ENCODE measurements at regions of chr2 and their contacts with region 1.

Region 1: DNA sequence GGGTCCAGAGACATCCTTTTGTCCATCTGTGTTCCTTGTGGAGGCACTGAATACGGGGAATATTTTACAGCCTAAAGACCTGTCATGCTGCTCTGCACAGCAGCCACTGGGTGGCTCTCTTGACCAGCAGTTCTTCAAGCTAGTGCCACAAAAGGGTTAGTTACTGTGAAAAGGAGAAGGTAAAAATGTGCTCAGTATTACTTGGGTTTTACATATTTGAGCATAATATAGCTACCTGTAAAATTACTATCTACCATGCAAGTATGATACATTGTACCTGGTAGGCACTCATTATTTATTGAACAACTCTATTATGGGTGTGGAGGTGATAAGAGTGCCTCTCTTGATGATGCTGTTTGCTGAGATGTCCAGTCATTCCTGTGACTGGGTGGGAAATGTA is 23.6 kb downstream of the FZD5 start:
- DNase-seq: no peak
- H3K4me3 ChIP-seq: no peak overlapping the region
- H3K27ac ChIP-seq: no peak overlapping the region
- H3K4me1 ChIP-seq: peaks cover 0 to 5% (median 0%) of the 10 kb centered on the region in 4 experiments; a peak in 1 of 7 replicates
- H3K27me3 ChIP-seq: no peaks in the 10 kb centered on the region
- CTCF ChIP-seq: peak; percentile 70 to 96 (median 95)
- EP300 ChIP-seq: no peak
- POLR2A ChIP-seq: no peak
- RAD21 ChIP-seq: peak; percentile 100

Region 2: GRCh38 chr2:207625018-207625907 is 120.9 kb before region 1 on chr2 and contains the start of gene METTL21A:
- CTCF ChIA-PET with region 1: interaction called, 13 read pairs
- POLR2A ChIA-PET with region 1: interaction called, 7 read pairs
- DNase-seq: peak; percentile 46 to 86
- H3K4me3 ChIP-seq: peak within 1 kb of the TSS; percentile 67 to 94 (median 82)
- H3K27ac ChIP-seq: peak within 1 kb of the TSS; percentile 72
- H3K4me1 ChIP-seq: peaks cover 0 to 4% (median 0%) of the 10 kb centered on the region in 4 experiments; a peak in 1 of 7 replicates
- H3K27me3 ChIP-seq: no peaks in the 10 kb centered on the region
- CTCF ChIP-seq: peak; percentile 37 to 45 (median 37); a peak in 3 of 4 replicates
- EP300 ChIP-seq: peak in 1 of 2 experiments; percentile 13; a peak in 1 of 3 replicates
- POLR2A ChIP-seq: peak; percentile 58 to 78
- RAD21 ChIP-seq: 0 out of 4 replicates have a peak, but pooled peaks have one; percentile 10 to 16
- total RNA-seq, gene METTL21A: 52.2 and 55.0 TPM in 2 replicates

Region 3: GRCh38 chr2:207734264-207734635 is 11.9 kb before region 1 on chr2:
- CTCF ChIA-PET with region 1: interaction called, 12 read pairs
- POLR2A ChIA-PET with region 1: no interaction called
- DNase-seq: no peak
- H3K4me3 ChIP-seq: no peak overlapping the region
- H3K27ac ChIP-seq: no peak overlapping the region
- H3K4me1 ChIP-seq: 0 out of 7 replicates have a peak, but pooled peaks cover 0 to 2% (median 0%) of the 10 kb centered on the region in 4 experiments
- H3K27me3 ChIP-seq: no peaks in the 10 kb centered on the region
- CTCF ChIP-seq: peak in 2 of 3 experiments; percentile 10 to 18; a peak in 2 of 4 replicates
- EP300 ChIP-seq: no peak
- POLR2A ChIP-seq: no peak
- RAD21 ChIP-seq: peak; percentile 24 to 31; a peak in 2 of 4 replicates

Region 4: DNA sequence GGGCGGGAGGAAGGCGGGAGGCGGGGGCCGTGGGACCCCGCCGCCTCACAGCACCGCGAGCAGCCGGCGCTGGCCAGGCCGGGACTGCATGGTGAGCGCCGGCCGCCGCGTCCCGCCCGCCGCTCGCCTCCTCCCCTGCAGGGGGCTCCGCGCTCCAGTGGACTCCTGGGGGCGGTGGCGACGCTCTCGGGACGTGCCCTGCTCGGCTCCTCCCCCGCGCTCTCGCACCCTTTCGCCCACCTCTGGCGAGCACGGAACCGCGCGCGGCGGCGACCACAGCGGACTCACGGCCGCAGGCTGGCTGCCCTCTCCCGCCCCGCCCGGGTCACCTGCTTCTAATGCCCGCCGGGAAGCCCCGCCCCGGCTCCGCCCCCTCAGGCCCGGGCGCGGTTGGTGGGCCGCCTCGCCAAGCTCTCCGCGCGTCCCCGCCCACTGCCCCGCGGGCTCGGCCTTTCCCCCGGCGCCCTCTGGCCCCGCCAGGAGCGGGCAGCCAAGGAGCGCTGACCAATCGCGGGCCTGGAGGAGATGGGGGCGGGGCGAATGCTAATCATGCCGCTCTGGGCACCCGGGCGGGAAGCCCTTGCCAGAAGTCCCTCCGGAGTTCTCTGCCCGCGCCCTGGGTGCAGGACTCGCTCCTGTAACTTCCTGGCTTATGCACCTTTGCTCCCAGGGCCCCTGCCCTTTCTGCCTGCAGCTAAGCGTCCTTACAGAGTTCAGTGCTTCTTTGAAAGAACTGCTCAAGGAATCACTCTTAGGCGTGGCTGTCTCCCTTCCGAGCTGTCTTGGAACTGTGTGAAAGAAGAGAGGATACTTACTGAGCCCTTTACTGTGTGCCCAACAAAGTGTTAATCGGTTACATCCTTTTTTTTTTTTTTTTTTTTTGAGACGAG is 23.7 kb after region 1 on chr2 and contains the start of gene FZD5:
- CTCF ChIA-PET with region 1: interaction called, 26 read pairs
- POLR2A ChIA-PET with region 1: interaction called, 5 read pairs
- DNase-seq: peak; percentile 94 to 99
- H3K4me3 ChIP-seq: peak within 1 kb of the TSS; percentile 84 to 96 (median 86)
- H3K27ac ChIP-seq: peak within 1 kb of the TSS; percentile 24; the same call in 1 of the 2 replicates
- H3K4me1 ChIP-seq: peaks cover 0 to 32% (median 26%) of the 10 kb centered on the region in 4 experiments; a peak in 6 of 7 replicates
- H3K27me3 ChIP-seq: peaks cover 0 to 4% (median 1%) of the 10 kb centered on the region in 4 experiments; a peak in 1 of 7 replicates
- CTCF ChIP-seq: peak; percentile 17 to 27 (median 25); a peak in 3 of 4 replicates
- EP300 ChIP-seq: no peak
- POLR2A ChIP-seq: peak; percentile 73 to 89
- RAD21 ChIP-seq: peak; percentile 28 to 48; a peak in 3 of 4 replicates
- total RNA-seq, gene FZD5: 55.2 and 56.6 TPM in 2 replicates

Region 5: GRCh38 chr2:207896525-207897295 is 150.6 kb after region 1 on chr2:
- CTCF ChIA-PET with region 1: interaction called, 16 read pairs
- POLR2A ChIA-PET with region 1: interaction called, 11 read pairs
- DNase-seq: peak in 1 of 2 experiments; percentile 36
- H3K4me3 ChIP-seq: peak overlapping the region in 1 of 4 experiments; percentile 24; a peak in 1 of 8 replicates
- H3K27ac ChIP-seq: 0 out of 2 replicates have a peak overlapping the region, but pooled peaks have one; percentile 57
- H3K4me1 ChIP-seq: peaks cover 12 to 37% (median 30%) of the 10 kb centered on the region in 4 experiments
- H3K27me3 ChIP-seq: no peaks in the 10 kb centered on the region
- CTCF ChIP-seq: peak; percentile 46 to 61 (median 49)
- EP300 ChIP-seq: no peak
- POLR2A ChIP-seq: no peak
- RAD21 ChIP-seq: peak; percentile 31 to 50; a peak in 3 of 4 replicates

Region 6: DNA sequence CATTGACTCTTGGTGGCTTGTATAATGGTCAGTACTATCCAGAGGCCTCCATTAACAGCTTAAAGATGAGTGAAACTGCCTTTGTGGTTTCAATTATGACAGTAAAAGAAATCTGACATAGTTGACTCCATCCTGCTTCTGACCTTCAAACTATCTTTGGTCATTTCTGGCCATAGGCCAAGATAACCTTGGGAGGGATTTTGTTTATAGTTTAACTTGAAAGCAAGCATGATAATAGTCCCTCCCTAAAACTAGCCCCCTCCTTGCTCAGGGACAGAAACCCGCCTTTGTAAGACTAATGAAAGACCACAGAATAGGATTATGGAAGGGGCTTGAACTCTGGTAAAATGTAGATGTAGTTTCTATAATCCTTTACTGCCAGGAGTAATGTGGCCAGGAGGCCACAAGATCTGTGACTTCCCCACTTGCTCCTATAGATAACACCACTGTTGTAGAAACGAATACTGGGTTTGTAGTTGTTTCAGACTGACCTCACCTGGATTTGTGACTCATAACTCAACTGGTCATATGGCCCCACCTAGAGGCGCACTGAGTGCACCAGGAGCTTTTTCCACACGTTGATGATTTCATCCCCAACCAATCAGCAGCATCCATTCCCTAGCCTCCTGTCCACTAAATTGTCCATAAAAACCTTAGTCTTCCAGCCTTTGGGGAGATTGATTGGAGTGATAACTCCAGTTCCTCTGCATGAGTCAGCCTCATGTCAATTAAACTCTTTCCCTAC is 287.8 kb after region 1 on chr2:
- CTCF ChIA-PET with region 1: interaction called, 157 read pairs
- POLR2A ChIA-PET with region 1: no interaction called
- DNase-seq: peak in 1 of 2 experiments; percentile 55
- H3K4me3 ChIP-seq: no peak overlapping the region
- H3K27ac ChIP-seq: no peak overlapping the region
- H3K4me1 ChIP-seq: no peaks in the 10 kb centered on the region
- H3K27me3 ChIP-seq: no peaks in the 10 kb centered on the region
- CTCF ChIP-seq: peak; percentile 47 to 83 (median 67)
- EP300 ChIP-seq: no peak
- POLR2A ChIP-seq: no peak
- RAD21 ChIP-seq: peak; percentile 91 to 93

Region 7: GRCh38 chr2:208072250-208072892 is 326.2 kb after region 1 on chr2:
- CTCF ChIA-PET with region 1: interaction called, 53 read pairs
- POLR2A ChIA-PET with region 1: no interaction called
- DNase-seq: peak; percentile 33 to 86
- H3K4me3 ChIP-seq: no peak overlapping the region
- H3K27ac ChIP-seq: no peak overlapping the region
- H3K4me1 ChIP-seq: peaks cover 0 to 2% (median 0%) of the 10 kb centered on the region in 4 experiments; a peak in 3 of 7 replicates
- H3K27me3 ChIP-seq: no peaks in the 10 kb centered on the region
- CTCF ChIP-seq: peak; percentile 36 to 88 (median 83)
- EP300 ChIP-seq: no peak
- POLR2A ChIP-seq: no peak
- RAD21 ChIP-seq: peak; percentile 93 to 94